CD4-positive, alpha-beta T cell (primary cell): ENCODE measurements at regions of chrX and their contacts with region 1.

Region 1: DNA sequence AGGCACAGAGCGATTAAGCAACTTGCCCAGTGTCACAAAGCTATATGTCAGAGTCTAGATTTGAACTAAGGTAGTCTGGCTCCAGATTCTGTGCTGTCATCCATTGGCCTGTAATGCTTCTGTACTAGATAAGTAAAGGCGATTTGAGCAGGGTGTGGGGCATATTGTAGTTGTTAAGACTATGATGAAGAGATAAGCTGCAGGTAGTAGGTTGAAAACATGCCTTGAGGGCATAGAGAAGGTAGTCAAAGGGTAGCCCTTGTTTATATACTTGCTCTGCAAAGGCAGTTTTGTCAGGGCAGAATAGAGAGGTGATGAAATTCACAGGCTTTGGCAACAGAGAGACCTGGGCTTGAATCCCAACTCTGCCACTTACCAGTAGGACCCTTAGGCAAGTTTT is 10.0 kb upstream of the FRMPD3 start:
- DNase-seq: no peak
- ATAC-seq: no peak
- H3K4me3 ChIP-seq: no peak overlapping the region
- H3K4me3 Mint-ChIP-seq: no peak overlapping the region
- H3K27ac ChIP-seq: no peak overlapping the region
- H3K27ac Mint-ChIP-seq: no peak overlapping the region
- H3K4me1 ChIP-seq: no peaks in the 10 kb centered on the region
- H3K4me1 Mint-ChIP-seq: no peaks in the 10 kb centered on the region
- H3K27me3 ChIP-seq: peaks cover 0 to 2% of the 10 kb centered on the region in 2 experiments
- H3K27me3 Mint-ChIP-seq: peaks cover 3% of the 10 kb centered on the region
- CTCF ChIP-seq: no peak

Region 2: GRCh38 chrX:107025545-107025944 is 413.9 kb before region 1 on chrX:
- CTCF ChIA-PET with region 1: no interaction called
- POLR2A ChIA-PET with region 1: no interaction called
- intact Hi-C with region 1: loop called in 1 of 2 experiments (anchors 10 kb)
- DNase-seq: peak in 3 of 14 experiments; percentile 12 to 24 (median 23)
- ATAC-seq: no peak
- H3K4me3 ChIP-seq: no peak overlapping the region
- H3K4me3 Mint-ChIP-seq: no peak overlapping the region
- H3K27ac ChIP-seq: no peak overlapping the region
- H3K27ac Mint-ChIP-seq: no peak overlapping the region
- H3K4me1 ChIP-seq: no peaks in the 10 kb centered on the region
- H3K4me1 Mint-ChIP-seq: no peaks in the 10 kb centered on the region
- H3K27me3 ChIP-seq: no peaks in the 10 kb centered on the region
- H3K27me3 Mint-ChIP-seq: peaks cover 5% of the 10 kb centered on the region
- CTCF ChIP-seq: peak; percentile 38

Region 3: GRCh38 chrX:107924136-107924746 is 484.8 kb after region 1 on chrX:
- CTCF ChIA-PET with region 1: no interaction called
- POLR2A ChIA-PET with region 1: no interaction called
- intact Hi-C with region 1: no loop called
- DNase-seq: no peak
- ATAC-seq: no peak
- H3K4me3 ChIP-seq: no peak overlapping the region
- H3K4me3 Mint-ChIP-seq: no peak overlapping the region
- H3K27ac ChIP-seq: no peak overlapping the region
- H3K27ac Mint-ChIP-seq: no peak overlapping the region
- H3K4me1 ChIP-seq: no peaks in the 10 kb centered on the region
- H3K4me1 Mint-ChIP-seq: no peaks in the 10 kb centered on the region
- H3K27me3 ChIP-seq: no peaks in the 10 kb centered on the region
- H3K27me3 Mint-ChIP-seq: no peaks in the 10 kb centered on the region
- CTCF ChIP-seq: no peak